ENCODE measurements at regions of chr13 and their contacts with region 1.

Region 1: GRCh38 chr13:44969551-44970484 is 19.5 kb downstream of the NUFIP1 start:
- DNase-seq: no peak
- H3K4me3 ChIP-seq: no peak overlapping the region
- H3K27ac ChIP-seq: no peak overlapping the region
- H3K4me1 ChIP-seq: no peaks in the 10 kb centered on the region
- H3K27me3 ChIP-seq: no peaks in the 10 kb centered on the region
- CTCF ChIP-seq: peak; percentile 74 to 82 (median 75)
- POLR2A ChIP-seq: no peak

Region 2: GRCh38 chr13:44484562-44485138 is 485.2 kb before region 1 on chr13:
- intact Hi-C with region 1: loop called (anchors 10 kb)
- DNase-seq: no peak
- H3K4me3 ChIP-seq: no peak overlapping the region
- H3K27ac ChIP-seq: no peak overlapping the region
- H3K4me1 ChIP-seq: no peaks in the 10 kb centered on the region
- H3K27me3 ChIP-seq: no peaks in the 10 kb centered on the region
- CTCF ChIP-seq: no peak
- POLR2A ChIP-seq: no peak

Measured in breast epithelium (tissue), 4 donors.